AG04449 (cell line): ENCODE measurements at regions of chr12 and their contacts with region 1.

Region 1: GRCh38 chr12:110357548-110357947 is 46.0 kb downstream of the ANAPC7 start:
- DNase-seq: no peak
- H3K4me3 ChIP-seq: no peak overlapping the region
- CTCF ChIP-seq: no peak

Region 2: DNA sequence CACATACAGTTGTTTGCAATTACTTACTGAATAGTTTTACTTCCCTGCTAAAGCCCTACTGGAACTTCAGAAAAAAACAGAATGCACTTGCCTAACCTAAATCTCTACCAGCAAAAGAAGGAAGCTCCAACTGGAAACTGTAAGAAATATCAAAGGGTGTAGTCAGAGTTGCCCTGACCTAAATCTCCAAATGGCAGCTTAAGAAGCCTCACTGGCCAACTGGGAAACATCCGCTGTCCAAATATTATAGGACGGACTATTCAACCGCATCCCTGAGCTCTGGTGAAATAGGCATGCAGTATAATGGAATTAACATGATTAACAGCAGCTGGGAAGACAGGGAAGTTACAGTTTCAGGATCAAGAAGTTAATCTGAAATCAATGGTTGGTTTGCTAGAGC is 21.6 kb after region 1 on chr12:
- CTCF ChIA-PET with region 1: interaction called, 19 read pairs
- POLR2A ChIA-PET with region 1: interaction called, 3 read pairs
- DNase-seq: no peak
- H3K4me3 ChIP-seq: no peak overlapping the region
- CTCF ChIP-seq: no peak